ENCODE measurements at regions of chr6 and their contacts with region 1.

Region 1: GRCh38 chr6:32940656-32941213 is at the start of gene HLA-DMB:
- DNase-seq: peak; percentile 88
- H3K4me3 Mint-ChIP-seq: peak within 1 kb of the TSS; percentile 81
- H3K27ac Mint-ChIP-seq: peak within 1 kb of the TSS; percentile 84
- H3K4me1 Mint-ChIP-seq: peaks cover 52% of the 10 kb centered on the region
- H3K27me3 Mint-ChIP-seq: peaks cover 5% of the 10 kb centered on the region
- total RNA-seq, gene HLA-DMB: 0.75 and 0.80 TPM in 2 replicates

Region 2: DNA sequence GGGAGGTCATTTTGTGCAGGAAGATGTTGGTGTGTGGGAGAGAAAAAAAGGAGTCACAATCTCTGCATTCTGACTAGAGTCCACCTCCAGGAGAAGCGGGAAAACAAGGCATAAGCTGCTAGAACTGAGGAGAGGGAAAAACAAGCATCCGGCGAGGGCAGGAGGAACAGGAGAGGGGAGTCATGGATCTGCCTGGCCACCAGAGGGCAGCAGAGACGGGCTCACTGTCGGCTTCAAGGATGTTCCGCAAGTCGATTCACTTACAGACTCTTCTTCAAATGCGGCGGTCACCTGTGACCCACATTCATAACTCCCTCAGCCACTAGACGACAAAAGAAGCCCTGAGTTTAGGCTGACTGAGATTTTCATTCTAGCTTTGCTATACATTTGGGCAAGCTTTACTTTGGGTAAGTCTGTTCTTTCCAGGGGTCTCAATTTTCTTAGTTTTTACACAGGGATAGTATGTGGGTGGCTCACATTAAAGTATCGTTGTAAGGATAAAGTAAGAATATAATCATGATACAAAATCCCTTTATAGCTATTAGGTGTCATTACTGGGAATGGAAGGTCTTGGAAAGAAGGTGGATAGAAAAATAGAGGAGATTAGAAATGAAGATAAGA is 527.2 kb before region 1 on chr6:
- intact Hi-C with region 1: no loop called
- DNase-seq: peak; percentile 94
- H3K4me3 Mint-ChIP-seq: no peak overlapping the region
- H3K27ac Mint-ChIP-seq: no peak overlapping the region
- H3K4me1 Mint-ChIP-seq: peaks cover 8% of the 10 kb centered on the region
- H3K27me3 Mint-ChIP-seq: peaks cover 52% of the 10 kb centered on the region

Region 3: GRCh38 chr6:32894080-32895005 is 46.4 kb before region 1 on chr6:
- intact Hi-C with region 1: loop called (anchors 1 kb)
- DNase-seq: peak; percentile 99
- H3K4me3 Mint-ChIP-seq: peak overlapping the region; percentile 99
- H3K27ac Mint-ChIP-seq: peak overlapping the region; percentile 92
- H3K4me1 Mint-ChIP-seq: peaks cover 37% of the 10 kb centered on the region
- H3K27me3 Mint-ChIP-seq: peaks cover 2% of the 10 kb centered on the region

Region 4: GRCh38 chr6:32960563-32960962 is 19.8 kb after region 1 on chr6:
- intact Hi-C with region 1: no loop called
- DNase-seq: no peak
- H3K4me3 Mint-ChIP-seq: no peak overlapping the region
- H3K27ac Mint-ChIP-seq: no peak overlapping the region
- H3K4me1 Mint-ChIP-seq: peaks cover 25% of the 10 kb centered on the region
- H3K27me3 Mint-ChIP-seq: no peaks in the 10 kb centered on the region

Measured in activated CD4-positive, alpha-beta T cell treated with anti-CD3 and anti-CD28 coated beads, Interleukin-2, amount 10 ng/mL, durations not matched to agents 24 days and 14 days (primary cell).